A673 (cell line): ENCODE measurements at regions of chr10 and their contacts with region 1.

Region 1: DNA sequence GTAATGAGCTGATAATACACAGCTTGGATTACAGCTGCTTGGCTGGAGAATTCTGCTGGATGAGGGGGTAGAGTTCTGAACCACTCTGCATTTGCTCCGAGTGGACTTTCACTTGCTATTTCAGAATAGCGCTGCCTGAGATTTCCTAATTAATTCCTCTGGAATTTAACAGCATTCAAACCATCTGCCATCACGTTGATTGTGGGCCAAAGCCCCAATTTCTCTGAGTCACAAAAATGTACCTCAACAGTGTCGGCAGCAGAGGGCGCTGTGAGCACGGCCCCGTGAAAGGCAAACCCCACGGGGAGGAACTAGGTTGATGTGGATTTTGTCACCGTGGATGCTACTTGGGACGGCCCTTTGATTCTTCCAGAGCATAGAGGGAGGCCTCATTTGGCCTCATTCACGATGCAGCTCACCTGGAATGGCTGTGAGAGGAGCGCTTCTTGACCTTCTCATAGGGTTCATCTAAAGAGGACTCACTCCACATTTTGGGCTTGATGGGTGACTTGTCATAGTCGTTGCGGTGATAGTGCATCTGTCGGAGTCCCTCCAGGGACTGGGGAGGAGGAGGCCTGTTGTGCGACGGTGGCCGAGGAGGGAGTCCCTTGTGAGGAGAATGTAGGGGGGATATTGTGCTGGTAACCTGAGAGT is 73.3 kb downstream of the PRPF18 start:
- DNase-seq: peak; percentile 69
- H3K4me3 ChIP-seq: no peak overlapping the region
- H3K27ac ChIP-seq: no peak overlapping the region
- H3K4me1 ChIP-seq: peaks cover 4% of the 10 kb centered on the region
- H3K27me3 ChIP-seq: no peaks in the 10 kb centered on the region
- CTCF ChIP-seq: peak; percentile 96

Region 2: GRCh38 chr10:13701157-13701919 is 41.3 kb after region 1 on chr10:
- CTCF ChIA-PET with region 1: no interaction called
- POLR2A ChIA-PET with region 1: interaction called, 36 read pairs
- intact Hi-C with region 1: no loop called
- DNase-seq: peak; percentile 65
- H3K4me3 ChIP-seq: no peak overlapping the region
- H3K27ac ChIP-seq: no peak overlapping the region
- H3K4me1 ChIP-seq: peaks cover 34% of the 10 kb centered on the region
- H3K27me3 ChIP-seq: no peaks in the 10 kb centered on the region
- CTCF ChIP-seq: no peak

Region 3: GRCh38 chr10:13722747-13723657 is 63.0 kb after region 1 on chr10:
- CTCF ChIA-PET with region 1: no interaction called
- POLR2A ChIA-PET with region 1: interaction called, 12 read pairs
- intact Hi-C with region 1: no loop called
- DNase-seq: no peak
- H3K4me3 ChIP-seq: no peak overlapping the region
- H3K27ac ChIP-seq: no peak overlapping the region
- H3K4me1 ChIP-seq: peaks cover 7% of the 10 kb centered on the region
- H3K27me3 ChIP-seq: no peaks in the 10 kb centered on the region
- CTCF ChIP-seq: no peak

Region 4: GRCh38 chr10:13776861-13777311 is 116.9 kb after region 1 on chr10:
- CTCF ChIA-PET with region 1: interaction called, 5 read pairs
- POLR2A ChIA-PET with region 1: no interaction called
- intact Hi-C with region 1: loop called (anchors 1 kb)
- DNase-seq: peak; percentile 72
- H3K4me3 ChIP-seq: no peak overlapping the region
- H3K27ac ChIP-seq: no peak overlapping the region
- H3K4me1 ChIP-seq: peaks cover 5% of the 10 kb centered on the region
- H3K27me3 ChIP-seq: no peaks in the 10 kb centered on the region
- CTCF ChIP-seq: no peak

Region 5: DNA sequence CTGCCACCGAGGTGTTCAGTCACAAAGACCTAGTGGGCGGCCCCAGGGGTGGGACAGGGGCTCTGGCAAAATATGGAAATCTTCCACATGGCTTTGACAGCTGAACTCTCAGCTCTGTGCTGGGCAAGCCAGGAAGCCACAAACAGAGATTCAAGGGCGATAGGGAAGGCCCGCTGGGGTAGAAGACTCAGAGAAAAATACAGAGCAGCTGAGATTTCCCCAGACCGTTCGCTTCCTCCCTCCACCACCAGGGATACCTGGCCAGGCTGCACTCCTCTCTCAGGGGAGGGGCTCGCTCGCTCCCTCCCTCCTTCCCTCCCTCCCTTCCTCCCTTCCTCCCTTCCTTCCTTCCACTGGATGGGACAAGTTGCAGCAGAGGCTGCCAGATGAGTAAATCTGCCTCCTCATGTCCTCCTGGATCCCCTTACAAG is 187.2 kb after region 1 on chr10:
- CTCF ChIA-PET with region 1: no interaction called
- POLR2A ChIA-PET with region 1: no interaction called
- intact Hi-C with region 1: no loop called
- DNase-seq: no peak
- H3K4me3 ChIP-seq: no peak overlapping the region
- H3K27ac ChIP-seq: no peak overlapping the region
- H3K4me1 ChIP-seq: no peaks in the 10 kb centered on the region
- H3K27me3 ChIP-seq: no peaks in the 10 kb centered on the region
- CTCF ChIP-seq: no peak